CD8-positive, alpha-beta T cell (primary cell): ENCODE measurements at regions of chr7 and their contacts with region 1.

Region 1: DNA sequence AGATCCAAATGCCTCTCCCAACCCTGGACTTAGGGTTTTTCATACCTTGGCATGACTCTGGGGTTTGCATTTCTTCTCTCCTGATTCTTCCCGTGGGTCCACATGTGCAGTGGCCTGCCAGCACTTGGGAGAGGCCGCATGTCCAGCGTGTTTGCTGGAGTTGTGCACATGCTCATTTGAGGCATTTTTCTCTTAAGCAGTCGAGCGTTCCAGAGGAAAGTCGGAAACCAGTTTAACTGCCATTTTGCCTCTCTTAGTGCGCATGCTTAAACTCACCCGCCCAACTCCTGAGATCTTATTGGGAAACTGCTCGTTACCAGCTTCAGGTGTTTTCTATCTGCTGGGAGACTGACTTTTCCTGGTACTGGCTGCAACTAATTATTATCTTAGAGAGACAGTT is 888.4 kb upstream of the PHF14 start:
- DNase-seq: no peak
- ATAC-seq: no peak
- H3K4me3 ChIP-seq: no peak overlapping the region
- H3K4me3 Mint-ChIP-seq: no peak overlapping the region
- H3K27ac ChIP-seq: no peak overlapping the region
- H3K27ac Mint-ChIP-seq: no peak overlapping the region
- H3K4me1 ChIP-seq: no peaks in the 10 kb centered on the region
- H3K4me1 Mint-ChIP-seq: no peaks in the 10 kb centered on the region
- H3K27me3 ChIP-seq: no peaks in the 10 kb centered on the region
- H3K27me3 Mint-ChIP-seq: no peaks in the 10 kb centered on the region
- CTCF ChIP-seq: no peak

Region 2: DNA sequence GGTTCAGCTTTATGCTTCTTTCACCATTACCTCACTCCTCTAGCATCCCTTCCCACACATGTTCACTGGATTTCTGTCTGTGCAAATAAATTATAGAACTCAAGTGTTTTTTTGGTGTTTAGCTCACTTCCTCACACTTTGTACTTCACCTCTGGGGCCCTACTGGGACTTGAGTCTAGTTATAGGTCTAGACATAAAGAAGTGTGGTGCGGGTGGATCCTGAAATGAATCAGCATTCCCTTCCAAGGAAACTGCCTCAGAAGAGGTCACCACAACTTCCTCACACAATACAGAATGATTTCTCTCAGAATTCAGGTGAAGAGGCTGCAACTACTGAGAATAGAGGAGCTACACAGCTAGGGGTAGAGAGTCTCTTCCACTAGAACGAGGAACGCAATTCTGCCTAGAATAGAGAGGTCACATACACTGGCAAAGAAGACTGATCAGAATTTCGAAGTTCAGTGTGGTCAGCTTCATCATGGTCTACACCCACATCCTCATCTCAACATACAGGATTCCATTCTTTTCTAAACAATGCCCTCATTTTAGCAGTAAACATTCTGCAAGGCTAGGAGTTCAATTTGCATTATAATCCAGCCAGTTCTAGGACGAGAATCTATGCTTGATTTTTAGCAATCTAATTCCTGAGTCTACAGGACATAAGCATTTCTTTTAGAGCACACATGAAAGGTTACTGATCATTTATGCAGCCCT is 50.2 kb before region 1 on chr7:
- CTCF ChIA-PET with region 1: no interaction called
- POLR2A ChIA-PET with region 1: no interaction called
- intact Hi-C with region 1: loop called in 1 of 2 experiments (anchors 5 kb)
- DNase-seq: no peak
- ATAC-seq: no peak
- H3K4me3 ChIP-seq: no peak overlapping the region
- H3K4me3 Mint-ChIP-seq: no peak overlapping the region
- H3K27ac ChIP-seq: no peak overlapping the region
- H3K27ac Mint-ChIP-seq: no peak overlapping the region
- H3K4me1 ChIP-seq: no peaks in the 10 kb centered on the region
- H3K4me1 Mint-ChIP-seq: no peaks in the 10 kb centered on the region
- H3K27me3 ChIP-seq: no peaks in the 10 kb centered on the region
- H3K27me3 Mint-ChIP-seq: no peaks in the 10 kb centered on the region
- CTCF ChIP-seq: no peak

Region 3: DNA sequence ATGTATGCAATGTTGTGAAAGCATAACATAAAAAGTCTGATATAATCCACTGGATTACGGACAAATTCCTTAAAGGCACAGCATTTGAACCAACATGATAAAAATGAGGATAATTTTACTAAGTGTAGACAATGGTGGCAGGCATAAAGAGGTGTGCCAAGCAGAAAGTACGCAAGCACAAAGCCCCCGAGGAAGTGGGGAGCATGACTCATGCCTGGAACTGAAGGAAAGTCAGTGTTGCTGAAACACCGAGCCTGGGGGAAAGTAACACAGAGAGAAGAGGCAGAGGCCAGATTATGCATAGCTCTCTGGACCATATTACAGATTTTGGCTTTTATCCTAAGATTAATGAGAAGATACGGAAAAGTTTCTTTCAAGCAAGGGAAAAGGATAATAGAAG is 398.4 kb after region 1 on chr7:
- CTCF ChIA-PET with region 1: no interaction called
- POLR2A ChIA-PET with region 1: no interaction called
- intact Hi-C with region 1: no loop called
- DNase-seq: no peak
- ATAC-seq: no peak
- H3K4me3 ChIP-seq: no peak overlapping the region
- H3K4me3 Mint-ChIP-seq: no peak overlapping the region
- H3K27ac ChIP-seq: no peak overlapping the region
- H3K27ac Mint-ChIP-seq: no peak overlapping the region
- H3K4me1 ChIP-seq: no peaks in the 10 kb centered on the region
- H3K4me1 Mint-ChIP-seq: no peaks in the 10 kb centered on the region
- H3K27me3 ChIP-seq: no peaks in the 10 kb centered on the region
- H3K27me3 Mint-ChIP-seq: no peaks in the 10 kb centered on the region
- CTCF ChIP-seq: no peak